ENCODE measurements at regions of chr6 and their contacts with region 1.

Region 1: GRCh38 chr6:83067448-83068413 is at the start of gene DOP1A:
- DNase-seq: peak; percentile 92
- CTCF ChIP-seq: peak; percentile 99

Region 2: DNA sequence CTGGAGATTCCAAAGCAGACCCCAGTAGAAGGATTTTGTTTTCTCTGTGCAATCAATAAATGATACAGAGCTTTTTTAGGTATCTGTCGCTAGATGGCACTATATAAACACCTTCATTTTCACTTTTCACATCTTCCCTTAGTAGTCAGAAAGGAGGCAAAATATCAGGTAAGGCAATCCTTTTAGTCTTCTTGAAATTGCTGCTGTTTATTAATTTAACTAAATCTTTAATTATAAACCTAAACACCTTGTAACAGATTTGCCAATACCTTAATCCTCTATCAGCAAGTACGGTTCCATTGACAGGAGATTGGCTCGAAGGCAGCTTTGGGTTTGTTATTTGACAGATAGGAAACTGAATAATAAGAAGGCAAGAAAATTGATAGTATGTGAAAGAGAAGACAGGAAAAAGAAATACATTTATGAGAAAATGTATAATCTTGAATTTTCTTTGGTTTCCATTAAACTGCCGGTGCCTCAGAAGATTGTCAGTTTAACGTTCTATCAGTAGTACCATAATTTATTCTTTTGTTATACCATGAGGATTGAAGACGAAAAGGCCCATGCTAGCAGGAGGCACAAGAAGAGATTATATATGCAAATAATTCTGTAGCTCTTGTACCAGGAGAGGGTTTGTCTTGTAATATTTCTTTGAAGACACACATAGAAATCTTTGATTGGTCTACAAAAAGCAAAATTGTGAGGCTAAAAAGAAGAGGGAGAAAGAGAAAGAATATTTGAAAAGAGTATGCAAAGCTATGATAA is 796.7 kb before region 1 on chr6:
- CTCF ChIA-PET with region 1: interaction called, 34 read pairs
- POLR2A ChIA-PET with region 1: no interaction called
- DNase-seq: peak; percentile 52
- CTCF ChIP-seq: peak; percentile 45

Region 3: GRCh38 chr6:82704048-82704447 is 363.7 kb before region 1 on chr6:
- CTCF ChIA-PET with region 1: no interaction called
- POLR2A ChIA-PET with region 1: no interaction called
- DNase-seq: no peak
- CTCF ChIP-seq: no peak

Region 4: DNA sequence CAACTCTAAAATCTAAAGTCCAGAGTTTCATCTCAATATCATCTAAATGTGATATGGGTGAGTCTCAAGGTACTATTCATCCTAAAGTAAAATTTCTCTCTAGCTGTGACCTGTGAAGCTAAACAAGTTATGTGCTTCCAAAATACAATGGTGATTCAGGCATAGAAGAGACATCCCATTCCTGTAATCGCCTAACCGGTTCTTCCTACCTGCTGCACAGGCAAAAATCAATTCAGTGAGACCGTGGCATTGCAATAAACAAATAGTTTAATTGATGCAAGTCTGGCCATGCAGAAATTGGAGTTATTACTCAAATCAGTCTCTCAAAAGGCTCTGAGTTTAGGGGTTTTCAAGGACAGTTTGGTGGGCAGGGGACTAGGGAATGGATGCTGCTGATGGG is 234.9 kb before region 1 on chr6:
- CTCF ChIA-PET with region 1: no interaction called
- POLR2A ChIA-PET with region 1: no interaction called
- DNase-seq: no peak
- CTCF ChIP-seq: no peak

Region 5: DNA sequence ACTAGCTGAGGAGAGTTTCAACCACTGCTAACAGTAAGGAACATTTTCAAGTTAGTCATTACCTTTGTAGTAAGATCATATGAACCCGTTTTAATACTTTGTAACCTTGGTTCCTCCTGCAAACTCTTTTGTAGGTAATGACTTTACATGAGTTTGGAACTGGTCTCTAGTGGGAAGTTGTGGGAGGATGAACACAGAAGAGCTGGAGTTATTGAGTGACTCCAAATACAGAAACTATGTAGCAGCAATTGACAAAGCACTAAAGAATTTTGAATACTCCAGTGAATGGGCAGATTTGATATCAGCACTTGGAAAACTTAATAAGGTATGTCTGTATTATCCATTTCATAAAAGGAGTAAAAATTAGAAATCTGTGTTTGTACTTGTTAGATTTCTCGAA is 29.1 kb after region 1 on chr6:
- CTCF ChIA-PET with region 1: interaction called, 210 read pairs
- POLR2A ChIA-PET with region 1: no interaction called
- DNase-seq: no peak
- CTCF ChIP-seq: no peak

Region 6: DNA sequence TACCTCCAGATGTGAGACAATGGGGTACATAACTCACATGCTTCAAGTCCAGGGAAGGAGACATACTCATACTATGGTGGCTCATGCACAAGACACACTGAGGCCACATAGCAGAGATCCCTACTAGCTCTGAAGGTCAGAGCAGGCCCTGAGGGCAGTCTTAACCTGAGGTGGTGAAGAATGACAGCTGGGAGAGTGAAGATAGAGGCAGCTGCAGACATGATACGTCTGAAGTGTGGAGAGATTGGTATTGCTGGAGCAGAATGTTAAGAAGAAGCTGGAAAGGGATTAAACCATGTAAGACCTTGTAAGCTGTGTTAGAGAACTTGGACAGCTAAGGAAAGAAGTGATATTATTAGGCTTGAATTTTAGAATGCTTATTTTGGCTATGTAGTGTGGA is 92.4 kb after region 1 on chr6:
- CTCF ChIA-PET with region 1: interaction called, 22 read pairs
- POLR2A ChIA-PET with region 1: no interaction called
- DNase-seq: no peak
- CTCF ChIP-seq: no peak

Region 7: DNA sequence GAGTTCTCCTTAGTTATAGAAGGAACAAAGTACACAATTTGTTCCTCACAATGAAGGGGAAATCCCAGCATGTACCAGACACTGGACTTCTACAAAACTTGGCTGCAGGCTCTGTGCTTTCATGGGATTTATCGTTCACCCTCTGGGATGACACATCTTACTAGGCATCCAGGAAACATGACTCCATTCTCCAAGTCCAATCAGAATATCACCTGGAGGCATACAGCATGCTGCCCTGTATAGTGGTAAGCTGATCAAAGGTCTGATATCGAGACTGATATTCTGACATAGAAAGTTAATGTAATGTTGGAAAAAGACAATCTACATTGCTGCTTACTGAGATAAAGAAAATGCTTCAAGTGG is 132.1 kb after region 1 on chr6:
- CTCF ChIA-PET with region 1: interaction called, 114 read pairs
- POLR2A ChIA-PET with region 1: no interaction called
- DNase-seq: no peak
- CTCF ChIP-seq: no peak

Region 8: DNA sequence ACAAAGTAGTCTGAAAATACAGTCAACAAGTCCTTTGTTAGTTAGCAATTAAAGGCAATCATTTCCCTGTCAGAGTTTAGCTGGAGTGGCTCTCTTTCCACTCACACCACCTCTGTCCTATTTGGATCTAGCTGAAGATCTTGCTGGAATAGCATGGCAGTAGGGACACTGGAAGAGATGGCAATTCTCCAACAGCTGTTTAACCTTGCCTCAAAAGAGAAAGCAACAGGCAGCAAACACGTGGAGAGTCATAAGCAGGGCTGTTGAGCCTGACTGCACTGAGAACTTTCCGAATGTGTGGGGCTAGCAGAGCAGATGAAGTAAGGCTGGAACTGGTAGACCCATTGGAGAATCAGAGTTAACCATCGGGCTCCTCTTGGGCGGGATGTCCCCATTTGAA is 406.6 kb after region 1 on chr6:
- CTCF ChIA-PET with region 1: no interaction called
- POLR2A ChIA-PET with region 1: no interaction called
- DNase-seq: no peak
- CTCF ChIP-seq: no peak

Region 9: GRCh38 chr6:83514866-83515466 is 447.2 kb after region 1 on chr6:
- CTCF ChIA-PET with region 1: interaction called, 68 read pairs
- POLR2A ChIA-PET with region 1: no interaction called
- DNase-seq: peak; percentile 48
- CTCF ChIP-seq: peak; percentile 79

Measured in GM10248 (cell line).